Psoas muscle (tissue), 8 donors: ENCODE measurements at regions of chr12 and their contacts with region 1.

Region 1: GRCh38 chr12:121719926-121720414 is 7.4 kb downstream of the TMEM120B start:
- DNase-seq: no peak
- ATAC-seq: peak; percentile 63 to 68 (median 66)
- H3K4me3 ChIP-seq: no peak overlapping the region
- H3K27ac ChIP-seq: peak overlapping the region; percentile 94
- H3K4me1 ChIP-seq: peaks cover 35% of the 10 kb centered on the region
- H3K27me3 ChIP-seq: no peaks in the 10 kb centered on the region
- CTCF ChIP-seq: no peak

Region 2: GRCh38 chr12:121753844-121754264 is 33.9 kb after region 1 on chr12:
- intact Hi-C with region 1: loop called in 1 of 2 experiments (anchors 5 kb)
- DNase-seq: peak in 1 of 2 donors; percentile 84
- ATAC-seq: peak; percentile 69 to 88 (median 86)
- H3K4me3 ChIP-seq: no peak overlapping the region
- H3K27ac ChIP-seq: peak overlapping the region; percentile 80
- H3K4me1 ChIP-seq: peaks cover 13% of the 10 kb centered on the region
- H3K27me3 ChIP-seq: no peaks in the 10 kb centered on the region
- CTCF ChIP-seq: no peak